ENCODE measurements at regions of chr19 and their contacts with region 1.

Region 1: DNA sequence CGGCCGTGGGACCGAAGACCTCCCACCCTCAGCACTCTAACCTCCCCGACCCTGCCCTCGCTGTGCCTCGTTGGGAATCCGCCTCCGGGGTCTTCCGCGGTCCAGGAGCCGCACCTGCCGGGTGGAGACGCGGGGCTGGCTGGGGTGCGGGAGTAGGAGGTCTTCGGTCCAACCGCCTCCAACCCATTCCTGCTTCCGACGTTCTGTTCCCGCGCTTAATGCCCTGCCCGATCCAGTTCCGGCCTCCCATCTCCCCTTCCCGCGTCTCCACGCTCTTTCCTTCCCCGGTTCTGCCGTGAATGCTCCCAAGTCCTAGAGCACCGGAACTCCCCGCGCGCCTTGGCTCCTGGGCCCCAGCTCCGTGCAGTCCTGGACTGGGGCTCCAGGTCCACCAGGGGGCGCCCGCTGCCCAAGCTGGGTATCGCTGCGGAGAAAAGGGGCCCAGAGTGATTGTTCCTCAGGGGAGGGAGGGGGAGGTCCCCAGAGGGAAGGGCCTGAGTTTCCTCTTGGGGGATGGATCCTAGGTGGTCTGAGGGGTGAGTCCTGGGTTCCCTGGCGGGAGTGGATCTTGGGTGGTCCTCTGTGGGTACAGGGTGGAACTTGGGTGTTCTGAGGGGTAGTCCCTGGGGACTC is 14.1 kb upstream of the TNFSF9 start:
- DNase-seq: peak; percentile 97
- H3K4me3 Mint-ChIP-seq: peak overlapping the region; percentile 94
- H3K27ac Mint-ChIP-seq: peak overlapping the region; percentile 95
- H3K4me1 Mint-ChIP-seq: peaks cover 34% of the 10 kb centered on the region
- H3K27me3 Mint-ChIP-seq: no peaks in the 10 kb centered on the region

Region 2: GRCh38 chr19:6481541-6482342 is 35.0 kb before region 1 on chr19 and contains the start of gene DENND1C:
- intact Hi-C with region 1: loop called (anchors 5 kb)
- DNase-seq: peak; percentile 91
- H3K4me3 Mint-ChIP-seq: peak within 1 kb of the TSS; percentile 99
- H3K27ac Mint-ChIP-seq: peak within 1 kb of the TSS; percentile 96
- H3K4me1 Mint-ChIP-seq: peaks cover 23% of the 10 kb centered on the region
- H3K27me3 Mint-ChIP-seq: no peaks in the 10 kb centered on the region
- total RNA-seq, gene DENND1C: 63.7 and 67.6 TPM in 2 replicates

Region 3: GRCh38 chr19:6556480-6557195 is 39.9 kb after region 1 on chr19:
- intact Hi-C with region 1: loop called (anchors 5 kb)
- DNase-seq: peak; percentile 67
- H3K4me3 Mint-ChIP-seq: no peak overlapping the region
- H3K27ac Mint-ChIP-seq: no peak overlapping the region
- H3K4me1 Mint-ChIP-seq: peaks cover 3% of the 10 kb centered on the region
- H3K27me3 Mint-ChIP-seq: peaks cover 9% of the 10 kb centered on the region

Region 4: DNA sequence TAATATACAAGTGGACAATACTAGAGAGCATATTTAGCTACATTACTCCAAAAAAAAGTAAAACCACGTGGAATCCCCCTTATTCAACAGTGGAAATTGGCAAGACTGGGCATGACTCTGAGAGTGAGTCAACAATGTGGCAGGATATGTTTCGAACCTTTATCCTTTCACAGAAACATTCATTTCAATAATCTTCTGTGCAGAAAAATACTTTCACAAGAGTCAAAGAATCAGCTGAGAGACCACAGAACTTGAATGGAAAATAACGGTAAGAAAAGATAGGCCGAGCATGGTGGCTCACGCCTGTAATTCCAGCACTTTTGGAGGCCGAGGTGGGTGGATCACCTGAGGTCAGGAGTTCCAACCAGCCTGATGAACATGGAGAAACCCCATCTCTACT is 99.2 kb after region 1 on chr19:
- intact Hi-C with region 1: loop called (anchors 1 kb)
- DNase-seq: peak; percentile 68
- H3K4me3 Mint-ChIP-seq: no peak overlapping the region
- H3K27ac Mint-ChIP-seq: peak overlapping the region; percentile 73
- H3K4me1 Mint-ChIP-seq: peaks cover 22% of the 10 kb centered on the region
- H3K27me3 Mint-ChIP-seq: peaks cover 25% of the 10 kb centered on the region

Region 5: DNA sequence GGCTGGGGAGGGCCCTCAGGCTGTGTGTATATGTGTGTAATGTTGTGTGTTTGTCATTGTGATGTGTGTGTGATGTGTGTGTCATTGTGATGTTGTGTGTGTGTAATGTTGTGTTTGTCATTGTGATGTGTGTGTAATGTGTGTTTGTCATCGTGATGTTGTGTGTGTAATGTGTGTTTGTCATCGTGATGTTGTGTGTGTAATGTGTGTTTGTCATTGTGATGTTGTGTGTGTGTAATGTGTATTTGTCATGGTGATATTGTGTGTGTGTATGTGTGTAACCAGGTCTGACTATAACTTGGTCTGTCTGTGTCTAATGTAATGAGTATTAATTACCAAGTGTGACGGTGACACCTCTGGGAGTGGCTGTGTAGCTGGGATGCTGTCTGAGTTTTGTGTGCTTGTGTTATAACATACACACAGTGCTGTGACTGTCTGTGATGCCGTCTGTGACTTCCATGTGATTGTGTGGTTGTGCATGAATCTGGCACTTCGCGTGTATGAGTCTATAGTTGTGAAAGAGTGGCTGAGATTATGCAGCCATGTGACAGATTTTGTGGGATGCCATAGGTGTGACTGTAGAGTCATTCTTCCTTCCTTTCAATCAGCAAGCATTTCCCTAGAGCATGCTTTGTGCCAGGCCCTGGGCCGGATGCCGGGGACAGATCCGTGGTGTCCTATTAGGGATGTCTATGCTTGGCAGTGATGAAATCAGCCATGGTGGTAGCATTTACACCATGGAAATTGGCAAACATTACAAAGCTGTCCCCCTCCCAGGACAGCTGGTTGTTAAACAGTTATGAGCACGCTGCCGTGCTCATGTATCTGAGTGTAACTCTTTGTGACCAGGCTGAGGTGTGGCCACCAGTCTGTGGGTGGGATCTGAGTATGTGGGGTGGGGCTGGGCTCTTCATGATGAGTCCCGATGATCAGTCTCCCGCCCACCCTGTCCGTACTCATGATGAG is 146.7 kb after region 1 on chr19:
- intact Hi-C with region 1: loop called (anchors 2 kb)
- DNase-seq: no peak
- H3K4me3 Mint-ChIP-seq: peak overlapping the region; percentile 39
- H3K27ac Mint-ChIP-seq: no peak overlapping the region
- H3K4me1 Mint-ChIP-seq: peaks cover 46% of the 10 kb centered on the region
- H3K27me3 Mint-ChIP-seq: no peaks in the 10 kb centered on the region

Region 6: DNA sequence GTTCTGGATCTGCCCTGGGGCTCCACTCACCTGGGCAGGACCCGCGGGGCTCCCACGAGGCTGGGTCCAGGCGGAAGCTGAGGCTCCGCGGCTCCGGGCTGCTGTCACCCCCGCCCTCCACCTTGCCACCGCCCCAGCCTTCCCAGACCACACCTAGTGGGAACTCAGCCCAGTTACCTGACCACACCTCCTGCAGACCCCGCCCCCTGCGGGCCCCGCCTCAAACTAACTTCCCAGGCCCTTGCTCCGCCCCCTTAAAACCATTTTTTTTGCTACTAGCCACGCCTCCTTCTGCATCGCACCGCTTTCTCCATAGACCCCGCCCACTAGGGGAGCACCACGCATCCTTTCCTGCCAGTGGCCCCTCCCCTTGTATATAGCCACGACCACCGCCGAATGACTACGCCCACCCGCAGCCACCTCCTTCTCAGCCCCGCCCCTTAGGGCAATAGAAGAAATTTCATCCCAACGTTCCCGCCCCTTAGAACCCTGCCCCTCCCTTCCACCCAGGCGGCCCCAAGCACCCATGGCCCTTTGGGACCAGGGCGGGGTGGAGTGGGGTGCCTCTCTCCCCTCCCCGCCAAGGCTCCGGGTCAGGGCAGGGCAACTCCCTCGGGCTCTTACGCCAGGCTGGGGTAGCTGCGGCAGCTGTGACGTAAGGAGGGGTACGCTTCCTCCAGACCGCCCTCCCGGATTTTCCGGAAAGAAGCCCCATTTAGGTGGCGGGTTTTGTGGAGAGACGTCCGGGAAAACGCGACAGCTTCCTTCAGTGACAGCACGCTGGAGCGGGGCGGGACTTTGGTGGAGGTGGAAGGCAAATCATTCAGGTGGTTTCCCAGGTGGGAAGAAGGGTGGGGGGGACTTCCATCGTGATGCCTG is 250.8 kb after region 1 on chr19 and contains the start of gene SH2D3A:
- intact Hi-C with region 1: loop called (anchors 1 kb)
- DNase-seq: peak; percentile 98
- H3K4me3 Mint-ChIP-seq: peak within 1 kb of the TSS; percentile 88
- H3K27ac Mint-ChIP-seq: peak within 1 kb of the TSS; percentile 92
- H3K4me1 Mint-ChIP-seq: peaks cover 46% of the 10 kb centered on the region
- H3K27me3 Mint-ChIP-seq: no peaks in the 10 kb centered on the region
- total RNA-seq, gene SH2D3A: 9.8 and 11.0 TPM in 2 replicates

Measured in activated CD4-positive, alpha-beta T cell treated with anti-CD3 and anti-CD28 coated beads, Interleukin-2, amount 10 ng/mL, durations not matched to agents 24 days and 14 days (primary cell).